Kidney (tissue), 22 donors: ENCODE measurements at regions of chr14 and their contacts with region 1.

Region 1: DNA sequence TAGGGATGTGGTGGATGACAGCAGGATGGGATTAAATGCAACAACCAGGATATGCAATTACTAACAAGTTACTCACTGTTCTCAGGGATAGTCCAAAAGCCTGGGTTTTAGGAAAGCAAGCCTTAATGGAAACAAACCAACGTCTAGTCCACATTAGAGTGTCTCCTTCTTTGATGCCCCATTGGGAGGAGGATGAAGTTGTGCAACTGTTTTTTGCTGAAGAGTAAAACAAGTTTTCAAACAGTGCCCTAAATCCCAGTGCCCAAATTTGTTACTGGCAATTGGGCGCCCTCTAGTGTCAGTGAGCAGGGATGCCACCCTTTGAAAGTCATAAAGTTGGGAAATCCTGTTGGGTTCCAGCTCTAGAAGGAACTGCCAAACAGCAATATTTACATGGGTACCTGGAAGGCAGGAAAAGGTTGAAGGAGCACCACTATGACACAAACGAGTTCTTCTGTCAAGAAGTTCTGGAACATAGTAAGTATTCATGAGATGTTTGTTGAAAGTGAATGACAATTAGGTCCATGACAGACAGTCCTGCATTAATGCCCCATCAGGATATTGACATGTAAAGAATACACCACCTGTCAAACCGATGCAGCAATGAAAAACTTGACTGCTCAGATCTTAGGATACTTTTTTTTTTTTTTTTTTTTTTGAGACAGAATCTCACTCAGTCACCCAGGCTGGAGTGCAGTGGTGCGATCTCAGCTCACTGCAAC is 11.1 kb upstream of the DPF3 start:
- DNase-seq: peak in 4 of 5 donors; percentile 68 to 88 (median 74)
- H3K4me3 ChIP-seq: no peak overlapping the region
- H3K27ac ChIP-seq: no peak overlapping the region
- H3K4me1 ChIP-seq: peaks cover 0 to 8% (median 0%) of the 10 kb centered on the region in 3 donors
- H3K27me3 ChIP-seq: no peaks in the 10 kb centered on the region
- CTCF ChIP-seq: peak; percentile 94

Region 2: GRCh38 chr14:72516936-72517700 is 387.9 kb before region 1 on chr14:
- intact Hi-C with region 1: loop called (anchors 5 kb)
- DNase-seq: peak in 4 of 5 donors; percentile 83 to 92 (median 86)
- H3K4me3 ChIP-seq: no peak overlapping the region
- H3K27ac ChIP-seq: no peak overlapping the region
- H3K4me1 ChIP-seq: peaks cover 0 to 2% (median 0%) of the 10 kb centered on the region in 3 donors
- H3K27me3 ChIP-seq: no peaks in the 10 kb centered on the region
- CTCF ChIP-seq: peak; percentile 98

Region 3: GRCh38 chr14:72651081-72651480 is 253.9 kb before region 1 on chr14:
- intact Hi-C with region 1: no loop called
- DNase-seq: peak in 3 of 5 donors; percentile 23 to 47 (median 46)
- H3K4me3 ChIP-seq: no peak overlapping the region
- H3K27ac ChIP-seq: no peak overlapping the region
- H3K4me1 ChIP-seq: no peaks in the 10 kb centered on the region
- H3K27me3 ChIP-seq: no peaks in the 10 kb centered on the region
- CTCF ChIP-seq: no peak

Region 4: DNA sequence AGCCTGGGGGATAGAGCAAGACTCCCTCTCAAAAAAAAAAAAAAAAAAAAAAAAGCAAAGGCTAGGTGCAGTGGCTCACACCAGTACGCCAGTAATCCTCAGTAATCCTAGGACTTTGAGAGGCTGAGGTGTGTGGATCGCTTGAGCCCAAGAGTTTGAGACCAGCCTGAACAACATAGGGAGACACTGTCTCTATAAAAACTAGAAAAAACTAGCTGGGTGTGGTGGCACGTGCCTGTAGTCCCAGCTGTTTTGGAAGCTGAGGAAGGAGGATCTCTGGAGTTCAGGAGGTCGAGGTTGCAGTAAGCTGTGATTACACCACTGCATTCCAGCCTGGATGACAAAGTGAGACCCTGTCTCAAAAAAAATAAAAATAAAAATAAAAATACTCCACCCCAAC is 144.4 kb after region 1 on chr14:
- intact Hi-C with region 1: no loop called
- DNase-seq: no peak
- H3K4me3 ChIP-seq: no peak overlapping the region
- H3K27ac ChIP-seq: no peak overlapping the region
- H3K4me1 ChIP-seq: no peaks in the 10 kb centered on the region
- H3K27me3 ChIP-seq: no peaks in the 10 kb centered on the region
- CTCF ChIP-seq: no peak